Activated CD8-positive, alpha-beta T cell treated with anti-CD3 and anti-CD28 coated beads for 36 hours (primary cell): ENCODE measurements at regions of chr5 and their contacts with region 1.

Region 1: GRCh38 chr5:141512390-141512910 is 23.6 kb downstream of the PCDHGC5 start:
- DNase-seq: peak; percentile 94
- ATAC-seq: peak; percentile 38
- H3K4me3 Mint-ChIP-seq: peak overlapping the region; percentile 70
- H3K27ac Mint-ChIP-seq: peak overlapping the region; percentile 84
- H3K4me1 Mint-ChIP-seq: peaks cover 43% of the 10 kb centered on the region
- H3K27me3 Mint-ChIP-seq: no peaks in the 10 kb centered on the region
- CTCF ChIP-seq: peak; percentile 87

Region 2: DNA sequence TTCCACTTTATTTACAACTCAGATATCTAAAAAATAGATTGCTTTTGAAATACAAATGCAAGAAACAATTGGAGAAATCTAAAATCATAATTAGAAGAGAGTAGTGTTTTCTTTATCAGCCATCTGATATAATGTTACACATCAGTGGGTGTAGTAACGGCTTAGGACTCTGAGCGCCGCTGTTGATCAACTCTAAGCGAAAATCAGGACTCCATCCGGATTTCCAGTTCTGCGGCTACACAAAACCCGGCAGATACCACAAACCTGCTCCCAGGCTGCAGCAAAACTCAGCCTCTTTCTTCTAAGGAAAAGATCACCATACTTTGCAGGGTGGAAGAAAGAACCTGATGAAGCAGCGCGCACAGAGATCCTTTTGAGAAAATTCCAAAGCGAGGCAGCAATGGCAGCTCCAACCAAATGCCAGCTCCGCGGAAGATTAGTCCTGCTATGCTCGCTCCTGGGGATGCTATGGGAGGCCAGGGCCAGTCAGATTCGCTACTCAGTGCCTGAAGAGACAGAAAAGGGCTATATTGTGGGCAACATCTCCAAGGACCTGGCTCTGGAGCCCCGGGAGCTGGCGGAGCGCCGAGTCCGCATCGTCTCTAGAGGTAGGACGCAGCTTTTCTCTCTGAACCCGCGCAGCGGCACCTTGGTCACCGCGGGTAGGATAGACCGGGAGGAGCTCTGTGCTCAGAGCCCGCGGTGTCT is 109.7 kb before region 1 on chr5 and contains the start of gene PCDHGA9:
- CTCF ChIA-PET with region 1: interaction called, 10 read pairs
- POLR2A ChIA-PET with region 1: interaction called, 3 read pairs
- intact Hi-C with region 1: no loop called
- DNase-seq: peak; percentile 42
- ATAC-seq: peak; percentile 42
- H3K4me3 Mint-ChIP-seq: no peak within 1 kb of the TSS
- H3K27ac Mint-ChIP-seq: no peak within 1 kb of the TSS
- H3K4me1 Mint-ChIP-seq: no peaks in the 10 kb centered on the region
- H3K27me3 Mint-ChIP-seq: peaks cover 62% of the 10 kb centered on the region
- CTCF ChIP-seq: peak; percentile 47
- total RNA-seq, gene PCDHGA9: 0.09 TPM in 1 of 2 experiments, not detected in the other

Region 3: DNA sequence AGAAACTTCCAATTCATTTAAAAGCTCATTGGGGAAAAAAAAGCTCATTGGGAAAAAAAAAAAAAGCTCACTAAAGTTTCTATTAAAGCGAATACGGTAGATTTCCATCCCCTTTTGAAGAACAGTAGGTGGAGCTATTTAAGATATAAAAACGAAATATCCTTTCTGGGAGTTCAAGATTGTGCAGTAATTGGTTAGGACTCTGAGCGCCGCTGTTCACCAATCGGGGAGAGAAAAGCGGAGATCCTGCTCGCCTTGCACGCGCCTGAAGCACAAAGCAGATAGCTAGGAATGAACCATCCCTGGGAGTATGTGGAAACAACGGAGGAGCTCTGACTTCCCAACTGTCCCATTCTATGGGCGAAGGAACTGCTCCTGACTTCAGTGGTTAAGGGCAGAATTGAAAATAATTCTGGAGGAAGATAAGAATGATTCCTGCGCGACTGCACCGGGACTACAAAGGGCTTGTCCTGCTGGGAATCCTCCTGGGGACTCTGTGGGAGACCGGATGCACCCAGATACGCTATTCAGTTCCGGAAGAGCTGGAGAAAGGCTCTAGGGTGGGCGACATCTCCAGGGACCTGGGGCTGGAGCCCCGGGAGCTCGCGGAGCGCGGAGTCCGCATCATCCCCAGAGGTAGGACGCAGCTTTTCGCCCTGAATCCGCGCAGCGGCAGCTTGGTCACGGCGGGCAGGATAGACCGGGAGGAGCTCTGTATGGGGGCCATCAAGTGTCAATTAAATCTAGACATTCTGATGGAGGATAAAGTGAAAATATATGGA is 81.9 kb before region 1 on chr5 and contains the start of gene PCDHGA12:
- CTCF ChIA-PET with region 1: interaction called, 27 read pairs
- POLR2A ChIA-PET with region 1: no interaction called
- intact Hi-C with region 1: no loop called
- DNase-seq: peak; percentile 63
- ATAC-seq: peak; percentile 83
- H3K4me3 Mint-ChIP-seq: peak within 1 kb of the TSS; percentile 35
- H3K27ac Mint-ChIP-seq: no peak within 1 kb of the TSS
- H3K4me1 Mint-ChIP-seq: peaks cover 5% of the 10 kb centered on the region
- H3K27me3 Mint-ChIP-seq: peaks cover 58% of the 10 kb centered on the region
- CTCF ChIP-seq: peak; percentile 36
- total RNA-seq, gene PCDHGA12: not detected

Region 4: GRCh38 chr5:141524604-141525597 is 12.5 kb after region 1 on chr5:
- CTCF ChIA-PET with region 1: interaction called, 122 read pairs
- POLR2A ChIA-PET with region 1: interaction called, 14 read pairs
- intact Hi-C with region 1: no loop called
- DNase-seq: peak; percentile 54
- ATAC-seq: peak; percentile 72
- H3K4me3 Mint-ChIP-seq: no peak overlapping the region
- H3K27ac Mint-ChIP-seq: peak overlapping the region; percentile 56
- H3K4me1 Mint-ChIP-seq: peaks cover 44% of the 10 kb centered on the region
- H3K27me3 Mint-ChIP-seq: no peaks in the 10 kb centered on the region
- CTCF ChIP-seq: peak; percentile 99